HEK293T (cell line): ENCODE measurements at regions of chr2 and their contacts with region 1.

Region 1: DNA sequence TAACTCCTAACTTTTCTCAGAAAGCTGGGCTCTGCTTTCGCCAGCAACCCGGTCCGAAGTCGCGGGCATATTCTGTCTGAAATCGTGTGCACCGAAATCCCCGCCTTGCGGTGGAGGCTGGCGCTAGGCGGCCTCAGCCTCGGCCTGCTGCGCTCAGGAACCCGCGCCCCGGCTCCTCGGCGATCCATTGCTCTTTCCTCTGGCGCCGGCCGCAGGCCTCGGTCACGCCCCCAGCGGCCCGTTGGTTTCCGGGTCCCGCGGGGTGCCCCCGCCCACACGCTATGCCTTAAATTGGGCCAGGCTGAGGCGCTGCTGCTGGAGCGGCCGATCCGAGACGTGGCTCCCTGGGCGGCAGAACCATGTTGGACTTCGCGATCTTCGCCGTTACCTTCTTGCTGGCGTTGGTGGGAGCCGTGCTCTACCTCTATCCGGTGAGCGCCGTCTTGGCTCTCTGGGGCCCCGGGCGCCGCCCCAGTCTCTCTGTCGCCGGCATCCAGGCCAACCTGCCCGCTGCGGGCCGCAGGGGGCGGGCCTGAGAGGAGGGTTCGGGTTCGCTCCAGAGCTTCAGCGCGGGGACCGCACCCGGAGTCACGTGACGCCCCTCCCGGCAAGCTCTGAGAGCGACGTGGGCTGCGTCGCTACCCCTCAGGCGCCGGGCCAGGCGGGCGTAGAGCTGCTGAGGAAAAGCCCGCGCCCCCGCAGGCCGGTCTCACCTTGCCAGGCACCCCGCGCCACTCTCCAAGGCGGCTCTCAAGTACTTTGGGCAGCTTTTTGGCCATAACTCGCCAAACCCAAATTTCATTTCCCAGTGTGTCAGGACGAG is at the start of gene CYP20A1:
- DNase-seq: peak; percentile 89

Region 2: GRCh38 chr2:203225423-203226039 is 13.4 kb before region 1 on chr2:
- CTCF ChIA-PET with region 1: interaction called, 3 read pairs
- POLR2A ChIA-PET with region 1: interaction called, 13 read pairs
- DNase-seq: no peak

Region 3: DNA sequence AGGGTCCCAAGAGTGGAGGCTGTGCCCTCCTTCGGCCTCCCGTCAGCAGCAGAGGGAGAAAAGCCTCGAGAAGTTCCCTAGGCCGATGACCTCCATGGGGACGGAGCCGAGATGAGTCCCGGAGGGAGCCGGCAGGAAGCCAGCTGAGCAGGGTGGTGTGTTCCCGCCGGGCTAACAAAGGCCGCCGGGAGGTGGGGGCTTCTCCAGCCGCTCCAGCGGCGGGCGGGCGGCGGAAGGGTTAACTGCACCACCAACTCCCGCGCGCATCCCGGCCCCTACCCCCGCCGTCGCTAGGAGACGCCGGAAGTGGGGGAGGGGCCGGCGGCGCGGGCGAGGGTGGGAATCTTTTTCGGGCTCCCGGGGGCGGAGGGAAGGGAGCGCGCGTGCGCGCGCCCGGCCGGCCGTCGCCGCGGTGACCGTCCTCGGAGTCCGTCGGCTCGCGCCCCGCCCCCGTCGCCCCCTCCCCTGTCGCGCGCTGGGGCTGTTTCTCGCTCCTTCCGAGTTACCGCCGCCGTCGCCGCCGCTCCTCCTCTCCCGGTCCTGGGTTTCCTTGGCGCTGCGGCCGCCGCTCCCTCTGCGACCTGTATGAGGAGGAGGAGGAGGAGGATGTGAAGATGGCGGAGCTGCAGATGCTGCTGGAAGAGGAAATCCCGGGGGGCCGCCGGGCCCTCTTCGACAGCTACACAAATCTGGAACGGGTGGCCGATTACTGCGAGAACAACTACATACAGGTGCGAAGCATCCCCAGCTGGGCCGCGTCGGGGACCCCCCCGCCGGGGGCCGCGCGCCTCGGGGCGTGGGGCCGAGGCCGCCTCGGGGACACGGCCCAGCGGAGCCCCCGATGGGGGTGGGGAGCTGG is 89.2 kb after region 1 on chr2 and contains the start of gene ABI2:
- CTCF ChIA-PET with region 1: no interaction called
- POLR2A ChIA-PET with region 1: interaction called, 10 read pairs
- DNase-seq: peak; percentile 93